ENCODE measurements at regions of chr11 and their contacts with region 1.

Region 1: GRCh38 chr11:12167098-12168000 is 57.0 kb downstream of the MICAL2 start:
- DNase-seq: peak; percentile 92
- H3K4me3 ChIP-seq: no peak overlapping the region
- H3K27ac ChIP-seq: peak overlapping the region; percentile 95
- H3K4me1 ChIP-seq: peaks cover 59% of the 10 kb centered on the region
- H3K27me3 ChIP-seq: no peaks in the 10 kb centered on the region
- CTCF ChIP-seq: no peak
- POLR2A ChIP-seq: peak; percentile 78

Region 2: GRCh38 chr11:11871991-11872401 is 295.4 kb before region 1 on chr11:
- CTCF ChIA-PET with region 1: no interaction called
- POLR2A ChIA-PET with region 1: no interaction called
- dilution Hi-C with region 1: no loop called
- intact Hi-C with region 1: no loop called
- DNase-seq: no peak
- H3K4me3 ChIP-seq: no peak overlapping the region
- H3K27ac ChIP-seq: no peak overlapping the region
- H3K4me1 ChIP-seq: no peaks in the 10 kb centered on the region
- H3K27me3 ChIP-seq: no peaks in the 10 kb centered on the region
- CTCF ChIP-seq: no peak
- POLR2A ChIP-seq: no peak

Region 3: DNA sequence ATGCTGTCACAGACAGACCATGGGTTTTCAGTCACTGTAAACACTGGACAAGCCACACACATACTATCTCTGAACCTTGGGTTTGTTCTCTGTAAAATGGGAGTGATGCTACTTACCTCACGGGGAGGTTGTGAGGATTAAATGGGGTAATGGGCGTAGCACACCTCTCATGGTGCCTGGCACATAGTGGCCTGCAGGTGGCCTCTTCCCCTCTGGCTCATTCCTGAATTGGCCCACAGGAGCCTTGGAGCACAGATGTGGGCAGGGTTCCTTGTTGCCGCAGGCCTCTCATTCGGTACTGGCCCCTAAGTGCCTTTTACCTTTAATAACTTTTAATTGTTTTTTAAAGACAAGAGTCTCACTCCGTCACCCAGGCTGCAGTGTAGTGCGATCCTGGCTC is 45.3 kb before region 1 on chr11:
- CTCF ChIA-PET with region 1: interaction called, 5 read pairs
- POLR2A ChIA-PET with region 1: no interaction called
- dilution Hi-C with region 1: no loop called
- intact Hi-C with region 1: loop called (anchors 1 kb)
- DNase-seq: no peak
- H3K4me3 ChIP-seq: no peak overlapping the region
- H3K27ac ChIP-seq: no peak overlapping the region
- H3K4me1 ChIP-seq: peaks cover 38% of the 10 kb centered on the region
- H3K27me3 ChIP-seq: no peaks in the 10 kb centered on the region
- CTCF ChIP-seq: peak; percentile 43 to 56
- POLR2A ChIP-seq: no peak

Region 4: GRCh38 chr11:12137938-12138731 is 29.2 kb before region 1 on chr11:
- CTCF ChIA-PET with region 1: interaction called, 4 read pairs
- POLR2A ChIA-PET with region 1: interaction called, 3 read pairs
- dilution Hi-C with region 1: no loop called
- intact Hi-C with region 1: loop called (anchors 1 kb)
- DNase-seq: peak; percentile 82
- H3K4me3 ChIP-seq: no peak overlapping the region
- H3K27ac ChIP-seq: peak overlapping the region; percentile 61
- H3K4me1 ChIP-seq: peaks cover 19% of the 10 kb centered on the region
- H3K27me3 ChIP-seq: no peaks in the 10 kb centered on the region
- CTCF ChIP-seq: no peak
- POLR2A ChIP-seq: no peak

Region 5: DNA sequence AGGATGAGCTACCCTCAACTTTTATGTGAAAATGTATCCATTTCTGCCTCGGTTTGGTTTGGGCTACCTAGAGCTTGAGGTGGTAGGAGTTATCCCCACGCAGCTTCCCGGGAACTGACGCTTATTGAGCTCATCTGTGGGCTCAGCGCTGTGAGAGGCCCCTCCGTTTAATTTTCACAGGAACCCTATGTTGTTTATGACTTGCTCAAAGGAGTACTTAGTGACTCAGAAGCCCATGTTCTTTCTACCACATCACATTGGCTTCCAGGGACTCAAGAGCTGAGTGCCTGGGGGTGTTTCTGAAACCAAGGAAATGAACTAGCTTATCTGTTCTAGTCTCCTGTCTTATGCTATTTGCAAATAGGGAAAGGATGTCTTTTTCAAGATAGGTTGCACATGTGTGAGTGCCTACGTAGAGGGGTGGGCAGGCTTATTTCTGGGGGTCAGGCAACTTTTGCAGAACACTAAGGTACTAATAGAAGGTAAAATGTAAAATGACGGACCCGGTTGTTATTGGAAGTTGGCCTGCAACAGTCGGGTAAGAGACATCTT is 16.4 kb before region 1 on chr11:
- CTCF ChIA-PET with region 1: interaction called, 10 read pairs
- POLR2A ChIA-PET with region 1: no interaction called
- dilution Hi-C with region 1: no loop called
- intact Hi-C with region 1: no loop called
- DNase-seq: no peak
- H3K4me3 ChIP-seq: no peak overlapping the region
- H3K27ac ChIP-seq: no peak overlapping the region
- H3K4me1 ChIP-seq: no peaks in the 10 kb centered on the region
- H3K27me3 ChIP-seq: no peaks in the 10 kb centered on the region
- CTCF ChIP-seq: no peak
- POLR2A ChIP-seq: no peak

Region 6: GRCh38 chr11:12182676-12183541 is 15.6 kb after region 1 on chr11:
- CTCF ChIA-PET with region 1: interaction called, 19 read pairs
- POLR2A ChIA-PET with region 1: interaction called, 4 read pairs
- dilution Hi-C with region 1: no loop called
- intact Hi-C with region 1: loop called (anchors 1 kb)
- DNase-seq: peak; percentile 89
- H3K4me3 ChIP-seq: no peak overlapping the region
- H3K27ac ChIP-seq: peak overlapping the region; percentile 99
- H3K4me1 ChIP-seq: peaks cover 54% of the 10 kb centered on the region
- H3K27me3 ChIP-seq: no peaks in the 10 kb centered on the region
- CTCF ChIP-seq: no peak
- POLR2A ChIP-seq: no peak

Region 7: DNA sequence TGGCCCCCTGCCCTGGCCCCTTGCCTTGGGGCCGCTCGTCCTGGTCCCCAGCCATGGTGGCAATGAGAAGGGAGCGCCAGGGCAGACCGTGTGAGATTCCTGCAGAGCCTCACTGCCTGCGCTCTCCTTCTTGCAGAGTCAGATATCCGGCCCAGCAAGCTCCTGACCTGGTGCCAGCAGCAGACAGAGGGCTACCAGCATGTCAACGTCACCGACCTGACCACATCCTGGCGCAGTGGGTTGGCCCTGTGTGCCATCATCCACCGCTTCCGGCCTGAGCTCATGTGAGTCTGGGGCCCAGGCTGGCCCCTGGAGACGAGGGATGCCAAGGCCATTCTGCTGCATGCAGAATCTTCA is 57.2 kb after region 1 on chr11:
- CTCF ChIA-PET with region 1: interaction called, 10 read pairs
- POLR2A ChIA-PET with region 1: no interaction called
- dilution Hi-C with region 1: no loop called
- intact Hi-C with region 1: no loop called
- DNase-seq: peak; percentile 28
- H3K4me3 ChIP-seq: no peak overlapping the region
- H3K27ac ChIP-seq: peak overlapping the region; percentile 65
- H3K4me1 ChIP-seq: peaks cover 35% of the 10 kb centered on the region
- H3K27me3 ChIP-seq: no peaks in the 10 kb centered on the region
- CTCF ChIP-seq: no peak
- POLR2A ChIP-seq: no peak

Region 8: DNA sequence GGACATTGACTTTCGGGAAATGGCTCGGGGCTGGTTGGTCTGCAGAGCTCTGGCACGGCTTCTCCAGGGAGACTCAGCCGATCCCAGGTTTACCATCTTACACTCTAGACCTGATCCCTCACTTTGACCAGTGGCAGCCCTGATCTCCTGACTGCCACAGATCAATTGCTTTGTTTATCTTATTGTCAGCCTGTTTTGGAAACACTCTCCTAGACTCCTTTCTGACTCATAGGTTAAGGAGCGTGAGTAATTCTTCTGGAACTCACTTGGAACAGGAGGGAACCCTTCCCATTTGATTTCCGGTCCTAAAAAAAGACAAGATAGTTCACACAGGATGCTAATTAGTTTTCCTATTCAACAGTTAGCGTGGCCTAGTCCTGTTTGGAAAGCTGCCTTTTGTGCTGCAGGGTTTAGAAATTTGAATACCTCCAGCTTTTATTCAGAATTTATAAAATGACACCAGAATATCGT is 1094.3 kb after region 1 on chr11:
- CTCF ChIA-PET with region 1: no interaction called
- POLR2A ChIA-PET with region 1: no interaction called
- dilution Hi-C with region 1: no loop called
- intact Hi-C with region 1: no loop called
- DNase-seq: peak; percentile 68
- H3K4me3 ChIP-seq: peak overlapping the region in 1 of 3 experiments; percentile 13
- H3K27ac ChIP-seq: peak overlapping the region; percentile 82
- H3K4me1 ChIP-seq: peaks cover 35% of the 10 kb centered on the region
- H3K27me3 ChIP-seq: no peaks in the 10 kb centered on the region
- CTCF ChIP-seq: no peak
- POLR2A ChIP-seq: peak; percentile 24